ENCODE measurements at regions of chr6 and their contacts with region 1.

Region 1: GRCh38 chr6:170516783-170517616 is 36.1 kb downstream of the PSMB1 start:
- DNase-seq: peak; percentile 35
- H3K4me3 Mint-ChIP-seq: no peak overlapping the region
- H3K27ac Mint-ChIP-seq: no peak overlapping the region
- H3K4me1 Mint-ChIP-seq: no peaks in the 10 kb centered on the region
- H3K27me3 Mint-ChIP-seq: peaks cover 41% of the 10 kb centered on the region
- CTCF ChIP-seq: peak; percentile 65

Region 2: GRCh38 chr6:168536665-168537539 is 1980.1 kb before region 1 on chr6:
- CTCF ChIA-PET with region 1: no interaction called
- intact Hi-C with region 1: no loop called
- DNase-seq: no peak
- H3K4me3 Mint-ChIP-seq: no peak overlapping the region
- H3K27ac Mint-ChIP-seq: no peak overlapping the region
- H3K4me1 Mint-ChIP-seq: no peaks in the 10 kb centered on the region
- H3K27me3 Mint-ChIP-seq: no peaks in the 10 kb centered on the region
- CTCF ChIP-seq: no peak

Region 3: DNA sequence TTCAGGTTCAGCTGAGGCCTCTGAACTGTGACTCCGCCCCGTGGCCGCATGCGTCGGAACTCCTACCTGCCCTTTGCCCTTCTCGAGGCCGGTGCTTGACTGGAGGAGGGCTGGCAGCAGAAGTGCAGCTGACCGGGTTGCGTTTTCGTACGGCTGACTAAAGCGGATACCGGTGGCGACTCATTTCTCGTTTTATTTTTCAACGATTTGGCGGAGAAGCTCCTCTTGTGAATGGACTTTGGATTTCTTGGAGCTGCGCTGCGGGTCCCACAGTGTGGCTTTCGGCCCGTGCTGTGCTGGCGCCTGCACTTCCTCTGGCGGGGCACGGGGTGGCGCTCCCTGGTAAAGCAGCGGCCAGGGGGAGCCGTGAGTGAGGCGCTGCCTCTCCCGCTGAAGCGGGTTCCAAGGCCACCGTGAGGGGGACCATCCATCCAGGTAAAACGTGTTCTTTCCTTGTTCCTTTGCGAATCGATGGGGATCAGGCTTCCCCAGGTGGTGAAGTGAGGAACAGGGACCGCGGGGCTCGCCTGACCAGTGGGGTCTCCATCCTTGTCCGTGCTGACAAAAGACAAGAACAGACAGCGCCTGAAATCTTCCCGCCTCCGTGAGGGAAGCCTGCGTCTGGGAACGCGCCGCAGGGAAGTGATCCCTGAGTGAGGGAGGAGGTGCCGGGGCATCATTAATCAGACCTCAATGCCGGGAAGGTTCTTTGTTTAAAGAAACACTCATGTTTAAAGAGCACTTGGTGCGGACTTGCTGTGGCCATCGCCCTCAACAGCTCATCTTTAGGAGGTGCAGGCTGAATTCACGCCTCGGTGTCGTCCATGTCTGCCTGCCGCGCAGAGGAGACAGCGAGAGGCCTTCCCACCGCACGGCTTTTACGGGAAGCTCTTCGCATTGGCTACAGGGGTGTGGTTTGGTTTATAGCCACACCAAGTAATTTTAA is 726.7 kb before region 1 on chr6:
- CTCF ChIA-PET with region 1: interaction called, 5 read pairs
- intact Hi-C with region 1: loop called (anchors 1 kb)
- DNase-seq: peak; percentile 82
- H3K4me3 Mint-ChIP-seq: peak overlapping the region; percentile 67
- H3K27ac Mint-ChIP-seq: no peak overlapping the region
- H3K4me1 Mint-ChIP-seq: no peaks in the 10 kb centered on the region
- H3K27me3 Mint-ChIP-seq: peaks cover 45% of the 10 kb centered on the region
- CTCF ChIP-seq: peak; percentile 96

Region 4: GRCh38 chr6:169831450-169832246 is 685.4 kb before region 1 on chr6:
- CTCF ChIA-PET with region 1: interaction called, 12 read pairs
- intact Hi-C with region 1: loop called (anchors 5 kb)
- DNase-seq: peak; percentile 78
- H3K4me3 Mint-ChIP-seq: peak overlapping the region; percentile 70
- H3K27ac Mint-ChIP-seq: peak overlapping the region; percentile 48
- H3K4me1 Mint-ChIP-seq: peaks cover 21% of the 10 kb centered on the region
- H3K27me3 Mint-ChIP-seq: peaks cover 27% of the 10 kb centered on the region
- CTCF ChIP-seq: peak; percentile 71

Region 5: DNA sequence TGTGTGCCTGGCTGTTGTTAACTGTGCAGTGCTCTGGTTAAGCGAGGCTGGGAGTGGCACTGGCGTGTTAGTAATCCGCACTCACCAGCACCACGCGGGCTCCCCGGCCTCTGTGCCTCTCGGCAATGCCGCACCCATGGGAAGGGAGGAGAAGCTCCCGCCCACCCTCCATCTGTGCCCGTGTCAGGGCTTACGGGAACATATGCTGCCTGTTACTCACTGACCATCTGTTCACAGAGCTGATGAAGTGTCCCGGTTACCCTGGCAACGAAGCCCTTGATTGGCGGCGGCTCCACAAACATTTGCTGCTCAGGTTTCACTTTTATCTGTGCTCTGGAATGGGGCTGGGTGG is 78.6 kb before region 1 on chr6:
- CTCF ChIA-PET with region 1: no interaction called
- intact Hi-C with region 1: no loop called
- DNase-seq: peak; percentile 75
- H3K4me3 Mint-ChIP-seq: no peak overlapping the region
- H3K27ac Mint-ChIP-seq: no peak overlapping the region
- H3K4me1 Mint-ChIP-seq: no peaks in the 10 kb centered on the region
- H3K27me3 Mint-ChIP-seq: peaks cover 9% of the 10 kb centered on the region
- CTCF ChIP-seq: no peak

Measured in Calu3 (cell line).